WTC11 (cell line): ENCODE measurements at regions of chr17 and their contacts with region 1.

Region 1: GRCh38 chr17:3913531-3914311 is 2.5 kb downstream of the P2RX1 start:
- DNase-seq: peak; percentile 91
- ATAC-seq: peak; percentile 92
- H3K4me3 Mint-ChIP-seq: no peak overlapping the region
- H3K27ac Mint-ChIP-seq: no peak overlapping the region
- H3K4me1 Mint-ChIP-seq: no peaks in the 10 kb centered on the region; the same call in 1 of the 2 replicates
- H3K27me3 Mint-ChIP-seq: peaks cover 3% of the 10 kb centered on the region; the same call in 1 of the 2 replicates
- CTCF ChIP-seq: peak; percentile 98

Region 2: GRCh38 chr17:3827124-3827773 is 86.5 kb before region 1 on chr17:
- CTCF ChIA-PET with region 1: no interaction called
- POLR2A ChIA-PET with region 1: no interaction called
- DNase-seq: peak; percentile 79
- ATAC-seq: peak; percentile 53
- H3K4me3 Mint-ChIP-seq: no peak overlapping the region
- H3K27ac Mint-ChIP-seq: no peak overlapping the region
- H3K4me1 Mint-ChIP-seq: no peaks in the 10 kb centered on the region
- H3K27me3 Mint-ChIP-seq: no peaks in the 10 kb centered on the region
- CTCF ChIP-seq: peak; percentile 54

Region 3: DNA sequence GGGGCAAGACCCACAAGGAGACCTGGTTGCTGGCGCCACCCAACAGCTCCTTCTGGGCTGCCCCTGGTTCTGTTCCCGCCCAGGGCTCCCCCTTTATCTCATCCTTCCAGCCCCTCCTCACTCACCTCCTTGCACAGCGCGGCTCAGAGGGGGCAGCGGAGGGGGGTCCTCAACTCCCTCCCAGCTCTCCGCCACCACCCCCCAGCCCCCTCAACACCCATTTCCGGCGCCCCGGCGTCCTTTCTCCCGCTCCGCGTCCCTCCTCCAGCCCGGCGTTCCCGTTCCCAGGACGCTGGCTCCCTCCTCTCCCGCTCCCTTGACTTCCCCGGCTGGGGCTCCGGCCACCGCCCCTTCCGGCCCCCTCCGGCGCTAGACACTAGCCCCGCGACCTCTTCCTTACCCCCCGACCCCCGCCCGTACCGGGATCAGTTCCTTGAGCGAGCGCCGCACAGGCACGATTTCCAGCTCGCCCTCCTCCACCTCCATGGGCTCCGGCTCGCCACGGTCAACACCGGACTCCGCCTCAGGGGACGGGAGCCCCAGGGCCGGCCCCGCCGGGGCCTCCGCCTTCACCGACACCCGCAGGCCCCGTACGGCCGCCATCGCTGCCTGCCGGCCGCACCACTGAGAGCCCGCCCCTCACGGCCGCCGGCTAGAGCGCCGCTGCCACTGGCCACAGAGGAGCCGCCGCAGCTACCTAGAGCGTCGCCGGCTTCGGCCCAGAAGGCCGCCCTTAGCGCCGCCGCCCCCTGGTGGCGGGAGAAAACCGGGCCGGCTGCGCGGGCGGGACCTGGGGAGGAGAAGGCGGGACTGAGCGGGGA is 67.9 kb before region 1 on chr17 and contains the start of gene NCBP3:
- CTCF ChIA-PET with region 1: interaction called, 21 read pairs
- POLR2A ChIA-PET with region 1: interaction called, 5 read pairs
- DNase-seq: peak; percentile 84
- ATAC-seq: peak; percentile 96
- H3K4me3 Mint-ChIP-seq: peak within 1 kb of the TSS; percentile 93
- H3K27ac Mint-ChIP-seq: peak within 1 kb of the TSS; percentile 93
- H3K4me1 Mint-ChIP-seq: peaks cover 18% of the 10 kb centered on the region
- H3K27me3 Mint-ChIP-seq: no peaks in the 10 kb centered on the region
- CTCF ChIP-seq: peak; percentile 73
- total RNA-seq, gene NCBP3: 48.7 to 51.3 TPM (median 49.6 TPM) in 3 replicates

Region 4: DNA sequence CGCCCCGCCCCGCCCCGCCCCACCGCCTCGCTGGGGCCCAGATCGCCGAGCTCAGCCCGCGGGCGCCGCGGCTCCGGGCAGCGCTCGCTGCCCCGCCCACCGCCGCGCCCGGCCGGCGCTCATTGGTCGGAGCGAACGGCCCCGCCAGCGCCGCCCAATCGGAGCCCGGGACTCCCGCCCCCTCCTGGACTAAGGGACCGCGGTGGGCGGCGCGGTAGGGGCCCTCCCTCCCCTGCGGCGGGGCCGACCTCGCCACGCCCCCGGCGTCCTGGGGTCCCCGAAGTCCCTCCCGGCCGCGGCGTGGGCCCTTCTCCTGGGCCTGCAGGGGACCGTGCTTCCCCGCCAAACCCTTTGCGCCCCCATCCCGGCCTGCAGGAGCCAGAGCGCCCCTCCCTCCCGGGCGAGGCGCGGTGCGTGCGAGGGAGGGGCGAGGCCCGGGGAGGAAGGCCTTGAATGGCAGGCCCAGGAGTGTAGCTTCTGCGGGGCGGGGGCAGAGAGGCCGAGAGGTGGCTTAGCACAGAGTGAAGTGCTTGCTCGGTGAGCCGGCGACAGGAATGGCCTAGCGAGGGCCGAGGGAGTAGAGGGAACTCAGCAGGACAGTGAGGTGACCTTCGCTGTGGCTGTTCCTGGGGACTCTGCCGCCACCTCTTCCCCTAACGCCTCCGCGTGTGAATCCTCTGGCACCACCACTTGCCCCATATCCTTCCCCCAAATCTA is 20.6 kb before region 1 on chr17 and contains the start of gene CAMKK1:
- CTCF ChIA-PET with region 1: interaction called, 17 read pairs
- POLR2A ChIA-PET with region 1: no interaction called
- DNase-seq: peak; percentile 86
- ATAC-seq: peak; percentile 80
- H3K4me3 Mint-ChIP-seq: peak within 1 kb of the TSS; percentile 68
- H3K27ac Mint-ChIP-seq: peak within 1 kb of the TSS; percentile 90
- H3K4me1 Mint-ChIP-seq: peaks cover 29% of the 10 kb centered on the region
- H3K27me3 Mint-ChIP-seq: peaks cover 7% of the 10 kb centered on the region; the same call in 1 of the 2 replicates
- CTCF ChIP-seq: no peak
- total RNA-seq, gene CAMKK1: 8.0 to 9.6 TPM (median 8.7 TPM) in 3 replicates

Region 5: DNA sequence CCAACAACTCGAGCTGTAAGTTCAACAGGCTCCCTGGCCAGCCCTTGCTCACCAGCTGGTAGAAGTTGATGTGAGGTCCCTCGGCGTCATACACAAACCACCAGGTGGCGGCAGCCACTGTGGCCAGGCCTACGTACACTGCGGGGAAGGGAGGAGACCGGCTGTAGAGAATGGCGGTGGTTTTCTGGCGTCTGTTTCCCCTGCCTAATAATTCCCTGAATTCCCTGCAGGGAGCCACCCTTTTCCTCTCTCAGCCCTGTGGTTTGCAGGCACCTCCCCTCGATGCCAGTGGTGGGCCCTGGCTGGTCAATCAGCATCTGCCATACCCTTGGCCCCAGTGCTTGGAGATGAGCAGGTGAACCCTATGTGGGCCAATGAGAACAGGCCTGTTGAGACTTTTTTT is 21.4 kb after region 1 on chr17:
- CTCF ChIA-PET with region 1: interaction called, 20 read pairs
- POLR2A ChIA-PET with region 1: no interaction called
- DNase-seq: peak; percentile 83
- ATAC-seq: peak; percentile 97
- H3K4me3 Mint-ChIP-seq: no peak overlapping the region
- H3K27ac Mint-ChIP-seq: no peak overlapping the region; the same call in 1 of the 2 replicates
- H3K4me1 Mint-ChIP-seq: no peaks in the 10 kb centered on the region
- H3K27me3 Mint-ChIP-seq: no peaks in the 10 kb centered on the region
- CTCF ChIP-seq: peak; percentile 46; the same call in 1 of the 2 replicates

Region 6: DNA sequence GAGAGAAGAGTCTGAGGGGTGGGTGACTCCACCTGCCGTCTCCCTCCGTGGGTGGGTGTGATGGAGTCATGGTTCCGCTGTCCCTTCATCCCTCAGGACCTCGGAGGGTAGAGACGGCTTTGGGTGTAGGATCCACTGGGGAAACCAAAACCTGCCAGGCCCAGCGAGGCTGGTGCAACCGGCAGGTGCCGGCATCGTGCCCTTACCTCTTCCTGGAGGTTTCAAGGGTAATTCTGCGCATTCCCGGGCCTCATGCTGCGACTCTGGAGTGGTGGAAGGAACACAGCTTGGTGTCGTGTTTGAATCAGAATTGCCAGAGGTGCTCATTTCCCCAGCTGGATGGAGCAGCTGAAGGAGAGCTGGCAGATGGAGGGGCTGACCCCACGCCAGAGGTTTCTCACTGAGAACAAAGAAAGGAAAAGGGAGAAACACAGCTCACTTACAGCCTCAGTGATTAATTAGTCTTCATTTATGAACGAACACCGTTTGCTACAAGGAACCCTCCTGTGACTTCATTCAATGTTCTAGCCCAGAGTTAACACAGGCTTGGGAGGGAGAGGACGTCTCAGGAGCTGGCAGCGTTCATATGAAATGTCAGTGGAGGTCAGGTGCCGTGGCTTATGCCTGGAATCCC is 66.8 kb after region 1 on chr17:
- CTCF ChIA-PET with region 1: interaction called, 15 read pairs
- POLR2A ChIA-PET with region 1: no interaction called
- DNase-seq: no peak
- ATAC-seq: no peak
- H3K4me3 Mint-ChIP-seq: no peak overlapping the region
- H3K27ac Mint-ChIP-seq: peak overlapping the region; percentile 72
- H3K4me1 Mint-ChIP-seq: peaks cover 37% of the 10 kb centered on the region
- H3K27me3 Mint-ChIP-seq: no peaks in the 10 kb centered on the region
- CTCF ChIP-seq: no peak

Region 7: DNA sequence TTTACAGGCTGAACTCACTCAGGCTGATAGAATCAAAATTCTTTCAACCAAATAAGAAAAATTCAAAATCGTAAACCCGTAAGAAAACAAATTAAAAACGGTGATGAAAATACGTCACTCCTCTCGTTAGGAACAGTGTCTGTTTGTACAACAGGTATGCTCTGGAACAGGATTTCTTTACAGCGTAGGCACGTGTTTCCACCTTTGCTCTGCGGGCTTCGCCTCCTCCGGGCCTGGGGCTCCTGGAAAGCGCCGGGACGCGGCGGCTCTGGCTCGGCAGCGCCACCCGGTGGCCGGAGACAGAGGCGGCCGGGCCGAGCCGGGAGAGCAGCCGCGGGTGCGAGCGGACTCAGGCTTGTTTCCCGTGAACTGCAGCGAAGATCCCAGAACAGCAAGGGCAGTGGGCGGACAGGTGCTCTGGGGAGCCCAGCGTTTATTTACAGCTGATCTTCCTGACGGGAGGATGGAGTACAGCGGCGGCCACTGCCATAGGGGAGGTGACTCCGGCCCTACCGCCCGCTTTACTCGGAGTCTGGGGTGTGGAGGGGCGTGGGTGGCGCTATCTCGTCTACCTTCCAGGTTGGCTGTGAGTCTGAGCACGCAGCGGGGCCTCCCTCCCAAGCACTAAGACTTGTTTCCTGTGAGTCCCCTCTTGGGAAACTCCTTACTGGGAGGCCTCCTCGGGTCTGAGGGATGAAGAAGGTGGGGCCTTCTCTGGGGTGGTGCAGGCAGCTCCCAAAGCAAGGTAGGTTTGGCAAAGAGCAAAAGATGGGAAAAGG is 91.0 kb after region 1 on chr17:
- CTCF ChIA-PET with region 1: interaction called, 31 read pairs
- POLR2A ChIA-PET with region 1: no interaction called
- DNase-seq: peak; percentile 78
- ATAC-seq: peak; percentile 67
- H3K4me3 Mint-ChIP-seq: peak overlapping the region; percentile 34
- H3K27ac Mint-ChIP-seq: no peak overlapping the region; the same call in 1 of the 2 replicates
- H3K4me1 Mint-ChIP-seq: peaks cover 22% of the 10 kb centered on the region
- H3K27me3 Mint-ChIP-seq: no peaks in the 10 kb centered on the region
- CTCF ChIP-seq: peak; percentile 96